ENCODE measurements at regions of chr5 and their contacts with region 1.

Region 1: GRCh38 chr5:52787600-52788504 is at the starts of genes ITGA1 and PELO:
- DNase-seq: peak; percentile 51
- ATAC-seq: peak; percentile 80
- H3K4me3 Mint-ChIP-seq: peak within 1 kb of the TSS; percentile 91
- H3K27ac Mint-ChIP-seq: peak within 1 kb of the TSS; percentile 78
- H3K4me1 Mint-ChIP-seq: peaks cover 15% of the 10 kb centered on the region
- H3K27me3 Mint-ChIP-seq: peaks cover 22% of the 10 kb centered on the region
- CTCF ChIP-seq: no peak
- total RNA-seq, gene ITGA1: 28.4 and 34.0 TPM in 2 replicates
- total RNA-seq, gene PELO: 20.0 and 23.0 TPM in 2 replicates

Region 2: DNA sequence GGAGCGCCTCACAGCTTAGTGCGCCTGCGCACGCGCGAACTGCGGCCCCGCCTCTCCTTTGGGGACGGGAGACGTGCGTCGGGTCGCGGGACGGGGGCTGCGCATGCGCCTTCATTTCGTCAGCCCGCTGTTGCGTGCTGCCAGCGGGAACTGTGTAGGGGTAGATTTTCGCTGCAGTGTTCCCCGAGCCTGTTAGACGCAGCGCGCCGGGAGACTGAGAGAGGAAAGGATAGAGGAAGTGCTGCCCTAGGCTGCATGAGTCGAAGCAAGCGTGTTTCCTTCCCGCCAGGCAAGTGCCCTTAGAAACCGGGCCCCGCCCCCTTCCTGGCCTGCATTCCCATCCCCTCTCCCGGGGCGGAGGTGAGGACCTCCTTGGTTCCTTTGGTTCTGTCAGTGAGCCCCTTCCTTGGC is 12.1 kb after region 1 on chr5:
- CTCF ChIA-PET with region 1: interaction called, 9 read pairs
- POLR2A ChIA-PET with region 1: interaction called, 51 read pairs
- intact Hi-C with region 1: loop called (anchors 1 kb)
- DNase-seq: peak; percentile 91
- ATAC-seq: peak; percentile 88
- H3K4me3 Mint-ChIP-seq: peak overlapping the region; percentile 93
- H3K27ac Mint-ChIP-seq: peak overlapping the region; percentile 90
- H3K4me1 Mint-ChIP-seq: peaks cover 57% of the 10 kb centered on the region
- H3K27me3 Mint-ChIP-seq: no peaks in the 10 kb centered on the region
- CTCF ChIP-seq: no peak

Region 3: DNA sequence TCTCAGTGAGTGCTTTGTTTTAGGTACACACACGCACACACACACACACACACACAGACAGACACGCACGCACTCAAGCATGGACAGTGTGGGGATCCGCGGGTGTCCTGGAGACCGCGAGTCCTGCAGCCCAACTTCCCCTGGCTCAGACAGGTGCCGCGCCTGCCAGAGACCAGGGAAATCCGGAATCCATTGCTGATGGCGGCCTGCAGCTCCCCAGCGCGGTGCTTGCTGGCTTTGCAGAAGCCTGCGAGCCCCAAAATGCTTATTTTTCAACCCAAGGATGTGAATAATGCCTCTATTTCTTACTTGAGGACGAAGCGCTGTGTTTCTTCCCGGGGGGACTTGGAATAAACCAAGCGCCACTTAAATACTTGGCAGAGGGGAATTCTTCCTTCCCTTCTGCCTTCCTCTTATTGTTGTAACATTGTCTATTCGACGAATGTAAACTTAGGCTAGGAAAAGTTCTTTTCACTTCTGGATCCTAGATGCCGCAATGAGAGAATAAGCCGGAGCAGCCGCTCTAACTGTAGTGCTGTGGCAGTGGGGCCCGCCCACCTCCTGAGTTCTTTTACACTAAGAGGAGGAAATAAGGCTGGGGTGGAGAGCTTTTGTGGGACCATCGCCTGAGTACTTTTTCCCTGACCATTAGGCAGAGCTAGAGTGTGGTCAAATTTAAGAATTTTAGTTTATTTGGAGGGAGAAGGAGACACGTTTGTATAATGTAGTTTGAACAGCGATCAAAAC is 202.1 kb after region 1 on chr5:
- CTCF ChIA-PET with region 1: no interaction called
- POLR2A ChIA-PET with region 1: no interaction called
- intact Hi-C with region 1: no loop called
- DNase-seq: no peak
- ATAC-seq: no peak
- H3K4me3 Mint-ChIP-seq: peak overlapping the region; percentile 72
- H3K27ac Mint-ChIP-seq: no peak overlapping the region
- H3K4me1 Mint-ChIP-seq: peaks cover 11% of the 10 kb centered on the region
- H3K27me3 Mint-ChIP-seq: peaks cover 37% of the 10 kb centered on the region
- CTCF ChIP-seq: no peak